HCT116 (cell line): ENCODE measurements at regions of chr12 and their contacts with region 1.

Region 1: GRCh38 chr12:122265931-122266771 is at the start of gene VPS33A:
- DNase-seq: peak; percentile 97
- ATAC-seq: peak; percentile 90
- H3K4me3 ChIP-seq: peak within 1 kb of the TSS; percentile 91 to 95
- H3K27ac ChIP-seq: peak within 1 kb of the TSS; percentile 72
- H3K4me1 ChIP-seq: peaks cover 9 to 16% of the 10 kb centered on the region in 2 experiments; a peak in 3 of 4 replicates
- H3K27me3 ChIP-seq: no peaks in the 10 kb centered on the region
- CTCF ChIP-seq: no peak
- POLR2A ChIP-seq: peak; percentile 69
- RAD21 ChIP-seq: no peak
- total RNA-seq, gene VPS33A: 19.4 TPM

Region 2: GRCh38 chr12:122225683-122226407 is 40.3 kb before region 1 on chr12 and contains the start of gene DIABLO:
- CTCF ChIA-PET with region 1: no interaction called
- POLR2A ChIA-PET with region 1: interaction called, 3 read pairs
- RAD21 ChIA-PET with region 1: interaction called in 1 of 2 experiments, 3 read pairs
- intact Hi-C with region 1: loop called (anchors 1 kb)
- DNase-seq: peak; percentile 97
- ATAC-seq: peak; percentile 93
- H3K4me3 ChIP-seq: peak within 1 kb of the TSS; percentile 71 to 100
- H3K27ac ChIP-seq: peak within 1 kb of the TSS; percentile 96
- H3K4me1 ChIP-seq: peaks cover 7 to 21% of the 10 kb centered on the region in 2 experiments
- H3K27me3 ChIP-seq: no peaks in the 10 kb centered on the region
- CTCF ChIP-seq: no peak
- POLR2A ChIP-seq: peak; percentile 83
- RAD21 ChIP-seq: no peak
- total RNA-seq, gene DIABLO: 60.1 TPM